Endothelial cell of umbilical vein (primary cell): ENCODE measurements at regions of chr14 and their contacts with region 1.

Region 1: DNA sequence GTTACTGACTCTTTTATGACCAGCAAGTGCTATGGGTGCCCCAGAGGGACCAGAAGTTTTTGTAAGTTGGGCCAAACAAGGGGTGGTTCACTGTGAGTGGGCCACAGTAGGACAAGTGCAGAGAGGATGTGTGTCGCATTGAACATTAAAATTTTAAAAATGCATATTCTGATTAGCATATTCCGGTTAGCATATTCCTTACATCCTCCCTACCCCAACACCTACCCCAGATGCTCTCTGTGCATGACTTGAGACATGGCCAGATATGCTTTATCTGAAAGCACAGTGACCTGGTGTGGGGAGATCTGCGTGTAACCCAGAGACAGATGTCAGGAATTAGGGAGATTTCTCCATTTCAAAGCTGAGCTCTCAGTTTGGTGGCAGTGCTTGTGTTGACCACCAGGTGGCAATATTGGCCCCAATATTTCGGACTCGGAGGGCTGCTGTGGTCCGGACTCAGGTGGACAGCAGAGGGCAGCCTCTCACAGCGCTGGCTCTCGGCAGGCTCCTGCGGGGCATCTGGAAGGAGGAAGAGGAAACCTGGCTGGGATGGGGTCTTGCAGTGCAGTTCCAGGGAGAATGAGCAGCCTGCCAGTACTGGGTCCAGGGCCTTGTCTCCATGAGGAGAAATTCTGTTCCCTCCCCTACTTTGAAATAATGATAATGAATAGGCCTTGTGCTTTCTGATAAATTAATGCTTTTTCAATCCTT is 1.6 kb upstream of the CEBPE start:
- DNase-seq: peak; percentile 89
- H3K4me3 ChIP-seq: no peak overlapping the region
- H3K27ac ChIP-seq: peak overlapping the region; percentile 81
- H3K4me1 ChIP-seq: peaks cover 21% of the 10 kb centered on the region
- H3K27me3 ChIP-seq: no peaks in the 10 kb centered on the region
- CTCF ChIP-seq: peak; percentile 100
- POLR2A ChIP-seq: no peak

Region 2: GRCh38 chr14:22966783-22967269 is 153.9 kb before region 1 on chr14:
- CTCF ChIA-PET with region 1: no interaction called
- POLR2A ChIA-PET with region 1: no interaction called
- dilution Hi-C with region 1: no loop called
- intact Hi-C with region 1: no loop called
- DNase-seq: no peak
- H3K4me3 ChIP-seq: no peak overlapping the region
- H3K27ac ChIP-seq: no peak overlapping the region
- H3K4me1 ChIP-seq: peaks cover 3% of the 10 kb centered on the region
- H3K27me3 ChIP-seq: no peaks in the 10 kb centered on the region
- CTCF ChIP-seq: no peak
- POLR2A ChIP-seq: no peak

Region 3: GRCh38 chr14:23076785-23077408 is 43.8 kb before region 1 on chr14:
- CTCF ChIA-PET with region 1: interaction called, 46 read pairs
- POLR2A ChIA-PET with region 1: interaction called, 3 read pairs
- dilution Hi-C with region 1: no loop called
- intact Hi-C with region 1: no loop called
- DNase-seq: peak; percentile 49
- H3K4me3 ChIP-seq: no peak overlapping the region
- H3K27ac ChIP-seq: no peak overlapping the region
- H3K4me1 ChIP-seq: peaks cover 27% of the 10 kb centered on the region
- H3K27me3 ChIP-seq: no peaks in the 10 kb centered on the region
- CTCF ChIP-seq: peak; percentile 46 to 53
- POLR2A ChIP-seq: no peak

Region 4: DNA sequence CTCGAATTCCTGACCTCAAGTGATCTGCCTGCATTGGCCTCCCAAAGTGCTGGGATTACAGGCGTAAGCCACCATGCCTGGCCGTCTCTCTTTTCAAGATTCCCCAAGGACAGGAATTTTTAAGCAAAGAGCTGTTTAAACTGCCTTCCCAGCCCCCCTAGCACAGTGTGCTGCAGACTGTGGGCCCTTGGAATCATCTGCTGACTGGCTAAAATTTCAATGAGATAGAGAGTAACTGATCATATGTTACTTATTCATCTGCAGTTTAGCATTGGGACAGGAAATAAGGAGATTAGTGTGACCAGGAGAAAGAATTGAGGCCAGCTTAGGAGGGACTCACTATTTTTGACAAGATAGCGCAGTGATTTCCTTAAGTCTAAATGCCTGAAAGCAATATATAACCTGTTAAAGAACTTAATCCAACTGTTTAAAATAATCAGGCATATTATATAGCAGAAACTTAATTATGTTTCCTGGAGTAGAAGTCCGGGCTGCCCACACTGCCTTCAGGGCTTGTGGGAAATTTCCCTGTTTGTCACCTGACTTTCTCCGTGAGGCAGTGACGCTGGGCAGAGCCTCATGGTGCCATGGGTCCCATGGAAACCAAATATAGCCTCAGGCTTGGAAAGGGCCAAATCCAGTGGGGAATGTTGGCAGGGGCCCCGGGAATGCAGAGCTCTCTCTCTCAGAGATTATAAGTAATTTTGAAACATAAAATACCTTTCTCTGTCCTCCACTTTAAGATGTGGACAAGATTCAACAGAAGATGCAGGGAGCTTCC is 21.2 kb after region 1 on chr14:
- CTCF ChIA-PET with region 1: interaction called, 43 read pairs
- POLR2A ChIA-PET with region 1: no interaction called
- dilution Hi-C with region 1: no loop called
- intact Hi-C with region 1: no loop called
- DNase-seq: no peak
- H3K4me3 ChIP-seq: no peak overlapping the region
- H3K27ac ChIP-seq: no peak overlapping the region
- H3K4me1 ChIP-seq: peaks cover 8% of the 10 kb centered on the region
- H3K27me3 ChIP-seq: no peaks in the 10 kb centered on the region
- CTCF ChIP-seq: no peak
- POLR2A ChIP-seq: no peak

Region 5: DNA sequence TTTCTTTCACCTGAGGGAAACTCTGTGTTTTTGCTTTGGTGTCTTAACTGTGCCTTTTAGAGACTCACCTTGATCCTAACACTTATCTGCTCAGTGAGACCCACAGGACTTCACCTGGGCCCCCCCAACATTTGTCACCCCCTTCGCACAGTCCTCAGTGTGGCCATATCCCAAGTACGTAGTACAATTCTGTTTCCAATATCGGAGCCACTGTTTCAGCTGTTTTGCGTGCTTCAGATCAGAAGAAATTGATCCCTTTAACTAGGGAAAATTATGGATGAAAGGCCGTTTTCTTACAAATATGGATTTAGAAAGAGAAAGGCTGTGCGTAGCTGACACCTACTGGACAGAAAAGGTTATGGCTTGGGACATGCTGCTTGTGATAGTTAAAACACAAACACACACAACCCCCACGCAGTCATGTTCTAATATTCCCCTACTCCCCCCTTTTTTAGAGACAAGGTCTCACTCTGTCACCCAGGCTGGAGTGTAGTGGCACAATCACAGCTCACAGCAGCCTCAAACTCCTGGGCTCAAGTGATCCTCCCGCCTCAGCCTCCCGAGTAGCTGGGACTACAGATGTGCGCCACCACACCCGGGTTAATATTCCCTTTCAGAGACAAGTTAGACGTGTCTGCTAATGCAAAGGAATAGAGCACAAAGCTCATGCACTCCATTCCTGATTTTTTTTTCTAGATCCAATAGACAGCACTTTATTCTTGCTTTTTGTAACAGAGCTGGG is 66.4 kb after region 1 on chr14:
- CTCF ChIA-PET with region 1: interaction called, 1,289 read pairs
- POLR2A ChIA-PET with region 1: interaction called, 11 read pairs
- dilution Hi-C with region 1: no loop called
- intact Hi-C with region 1: loop called (anchors 1 kb)
- DNase-seq: peak; percentile 81
- H3K4me3 ChIP-seq: no peak overlapping the region
- H3K27ac ChIP-seq: no peak overlapping the region
- H3K4me1 ChIP-seq: peaks cover 22% of the 10 kb centered on the region
- H3K27me3 ChIP-seq: peaks cover under 1 to 5% of the 10 kb centered on the region in 2 experiments
- CTCF ChIP-seq: peak; percentile 61 to 73
- POLR2A ChIP-seq: no peak

Region 6: GRCh38 chr14:23245282-23245681 is 124.6 kb after region 1 on chr14:
- CTCF ChIA-PET with region 1: interaction called, 10 read pairs
- POLR2A ChIA-PET with region 1: no interaction called
- dilution Hi-C with region 1: no loop called
- intact Hi-C with region 1: no loop called
- DNase-seq: no peak
- H3K4me3 ChIP-seq: no peak overlapping the region
- H3K27ac ChIP-seq: no peak overlapping the region
- H3K4me1 ChIP-seq: no peaks in the 10 kb centered on the region
- H3K27me3 ChIP-seq: peaks cover 8 to 10% of the 10 kb centered on the region in 2 experiments
- CTCF ChIP-seq: no peak
- POLR2A ChIP-seq: no peak

Region 7: GRCh38 chr14:23301288-23301968 is 180.7 kb after region 1 on chr14:
- CTCF ChIA-PET with region 1: interaction called, 53 read pairs
- POLR2A ChIA-PET with region 1: no interaction called
- dilution Hi-C with region 1: no loop called
- intact Hi-C with region 1: loop called (anchors 1 kb)
- DNase-seq: peak; percentile 99
- H3K4me3 ChIP-seq: peak overlapping the region; percentile 30 to 79 (median 76)
- H3K27ac ChIP-seq: peak overlapping the region; percentile 75
- H3K4me1 ChIP-seq: peaks cover 18% of the 10 kb centered on the region
- H3K27me3 ChIP-seq: no peaks in the 10 kb centered on the region
- CTCF ChIP-seq: peak; percentile 79 to 91
- POLR2A ChIP-seq: no peak

Region 8: GRCh38 chr14:23577004-23577681 is 456.4 kb after region 1 on chr14:
- CTCF ChIA-PET with region 1: no interaction called
- POLR2A ChIA-PET with region 1: no interaction called
- dilution Hi-C with region 1: no loop called
- intact Hi-C with region 1: no loop called
- DNase-seq: no peak
- H3K4me3 ChIP-seq: no peak overlapping the region
- H3K27ac ChIP-seq: no peak overlapping the region
- H3K4me1 ChIP-seq: no peaks in the 10 kb centered on the region
- H3K27me3 ChIP-seq: peaks cover 41 to 55% of the 10 kb centered on the region in 2 experiments
- CTCF ChIP-seq: no peak
- POLR2A ChIP-seq: no peak